ENCODE measurements at regions of chr11 and their contacts with region 1.

Region 1: DNA sequence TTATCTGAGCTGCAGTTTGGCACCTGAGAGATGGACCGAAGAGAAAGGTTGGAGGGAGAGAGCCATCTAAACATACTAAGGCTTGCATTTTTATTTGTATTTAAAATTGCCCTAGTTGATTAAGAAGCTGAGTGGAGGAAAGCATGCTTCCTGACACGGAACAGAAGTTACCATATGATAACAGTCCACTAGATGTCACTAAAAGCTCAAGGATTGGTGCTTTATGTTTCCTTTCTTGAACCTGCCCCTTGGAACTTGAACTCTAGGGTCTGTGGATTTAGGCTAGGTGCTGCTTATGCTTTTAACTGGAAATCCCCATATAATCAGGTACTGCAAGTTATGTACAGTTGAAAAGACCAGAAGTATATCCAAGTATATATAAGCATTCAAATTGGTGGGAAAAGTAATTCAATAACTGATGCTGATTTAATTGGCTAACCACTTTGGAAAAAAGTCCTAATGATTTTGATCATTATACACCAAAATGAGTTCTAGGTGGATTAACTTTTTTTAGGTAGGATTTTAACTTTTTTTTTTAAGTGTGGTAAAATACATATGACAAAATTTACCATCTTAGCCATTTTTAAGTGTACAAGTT is 9.5 kb downstream of the RBMXL2 start:
- DNase-seq: no peak
- H3K4me3 ChIP-seq: no peak overlapping the region
- CTCF ChIP-seq: no peak
- POLR2A ChIP-seq: no peak

Region 2: GRCh38 chr11:6635082-6635932 is 463.0 kb before region 1 on chr11:
- intact Hi-C with region 1: no loop called
- DNase-seq: peak in 1 of 2 donors; percentile 81
- H3K4me3 ChIP-seq: no peak overlapping the region
- CTCF ChIP-seq: no peak
- POLR2A ChIP-seq: no peak

Region 3: GRCh38 chr11:7442588-7443215 is 344.4 kb after region 1 on chr11:
- intact Hi-C with region 1: loop called (anchors 10 kb)
- DNase-seq: peak; percentile 63 to 93
- H3K4me3 ChIP-seq: no peak overlapping the region
- CTCF ChIP-seq: peak in 1 of 3 donors; percentile 22
- POLR2A ChIP-seq: no peak

Measured in lower leg skin (tissue), 4 donors.